WTC11 (cell line): ENCODE measurements at regions of chrX and their contacts with region 1.

Region 1: DNA sequence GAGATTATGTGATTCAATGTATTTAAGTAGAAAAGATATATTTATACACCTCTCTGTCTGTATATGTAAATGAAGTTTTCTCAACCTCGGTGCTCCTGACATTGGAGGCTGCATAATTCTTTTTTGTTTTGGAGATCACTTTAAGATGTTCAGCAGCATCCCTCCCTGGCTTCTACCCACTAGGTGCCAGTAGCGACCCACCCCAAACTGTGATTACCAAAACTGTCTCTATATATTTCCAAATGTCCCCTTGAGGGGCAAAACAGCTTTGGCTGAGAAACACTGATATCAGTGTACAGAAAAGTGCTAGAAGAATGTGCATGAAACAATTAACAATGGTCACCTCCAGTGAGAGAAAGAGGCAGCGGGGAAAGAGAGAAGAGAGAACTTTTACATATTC is 51.2 kb downstream of the DCX start:
- DNase-seq: peak; percentile 14
- ATAC-seq: peak; percentile 36; the same call in 1 of the 2 replicates
- H3K4me3 Mint-ChIP-seq: no peak overlapping the region
- H3K27ac Mint-ChIP-seq: no peak overlapping the region
- H3K4me1 Mint-ChIP-seq: no peaks in the 10 kb centered on the region
- H3K27me3 Mint-ChIP-seq: peaks cover 3% of the 10 kb centered on the region
- CTCF ChIP-seq: no peak

Region 2: DNA sequence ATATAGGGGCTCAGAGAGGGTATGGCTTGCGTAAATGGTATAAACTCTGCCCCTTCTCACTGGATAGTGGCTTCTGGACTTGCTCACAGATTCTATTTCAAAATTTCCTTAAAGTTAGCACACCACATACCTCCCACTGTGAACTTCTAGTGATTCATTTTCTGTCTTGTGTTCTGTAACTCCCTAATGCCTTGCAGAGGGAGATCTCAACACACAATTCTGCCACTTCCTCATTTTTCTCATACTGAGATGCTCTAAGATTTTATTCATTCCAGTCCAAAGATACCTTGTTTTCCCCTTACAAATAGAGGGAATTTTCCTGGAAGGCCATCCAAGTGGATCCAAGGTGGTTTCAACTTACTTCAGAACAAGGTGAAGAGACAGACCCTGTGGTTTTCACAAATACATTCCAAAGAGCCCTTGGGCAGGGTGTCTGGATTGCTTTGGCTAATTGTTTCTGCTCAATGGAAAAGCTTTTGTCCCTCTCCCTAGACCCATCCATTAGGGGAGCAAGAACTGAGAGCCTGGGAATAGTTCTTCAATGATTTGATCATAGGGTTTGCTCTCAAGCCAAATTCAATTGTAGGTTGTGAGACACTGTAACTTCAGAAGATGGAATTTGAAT is 38.5 kb before region 1 on chrX:
- CTCF ChIA-PET with region 1: no interaction called
- POLR2A ChIA-PET with region 1: no interaction called
- DNase-seq: no peak
- ATAC-seq: no peak
- H3K4me3 Mint-ChIP-seq: no peak overlapping the region
- H3K27ac Mint-ChIP-seq: no peak overlapping the region
- H3K4me1 Mint-ChIP-seq: peaks cover 9% of the 10 kb centered on the region
- H3K27me3 Mint-ChIP-seq: peaks cover 42% of the 10 kb centered on the region
- CTCF ChIP-seq: no peak

Region 3: GRCh38 chrX:111445486-111445885 is 84.6 kb after region 1 on chrX:
- CTCF ChIA-PET with region 1: interaction called, 13 read pairs
- POLR2A ChIA-PET with region 1: no interaction called
- DNase-seq: no peak
- ATAC-seq: no peak
- H3K4me3 Mint-ChIP-seq: no peak overlapping the region
- H3K27ac Mint-ChIP-seq: no peak overlapping the region
- H3K4me1 Mint-ChIP-seq: peaks cover 18% of the 10 kb centered on the region
- H3K27me3 Mint-ChIP-seq: no peaks in the 10 kb centered on the region
- CTCF ChIP-seq: peak; percentile 33; the same call in 1 of the 2 replicates